OCI-LY7 (cell line): ENCODE measurements at regions of chr5 and their contacts with region 1.

Region 1: DNA sequence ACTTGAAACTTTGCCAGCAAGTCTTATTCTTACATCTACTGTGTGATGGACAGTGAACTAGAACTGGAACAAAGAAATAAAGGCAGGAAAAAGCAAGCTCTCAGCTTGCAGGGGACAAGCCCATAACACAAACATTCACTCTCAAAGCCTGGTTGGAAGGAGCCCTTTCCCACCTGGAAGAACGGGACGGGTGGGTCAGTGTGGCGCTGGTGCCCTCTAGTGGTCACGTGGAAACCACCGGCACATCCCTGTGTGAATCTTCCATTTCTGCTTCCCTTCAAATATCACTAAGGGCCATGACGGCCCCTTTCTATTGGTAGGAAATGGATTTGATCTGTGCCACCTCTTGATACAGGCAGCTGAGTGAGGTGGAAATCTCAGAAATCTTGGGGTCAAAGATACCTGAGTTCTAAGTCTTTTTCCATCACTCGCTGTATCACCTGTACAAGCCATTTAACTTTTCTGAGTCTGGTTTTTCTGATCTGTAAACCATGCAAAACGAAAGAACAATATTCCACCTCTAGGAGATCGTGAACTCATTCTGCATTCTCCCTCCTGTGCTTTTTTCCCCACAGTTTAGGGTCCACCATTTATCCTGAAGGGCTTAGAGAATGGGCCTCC is 211.6 kb downstream of the MSX2 start:
- DNase-seq: peak; percentile 34
- H3K4me3 ChIP-seq: no peak overlapping the region
- H3K27ac ChIP-seq: no peak overlapping the region
- H3K4me1 ChIP-seq: no peaks in the 10 kb centered on the region
- CTCF ChIP-seq: peak; percentile 96

Region 2: DNA sequence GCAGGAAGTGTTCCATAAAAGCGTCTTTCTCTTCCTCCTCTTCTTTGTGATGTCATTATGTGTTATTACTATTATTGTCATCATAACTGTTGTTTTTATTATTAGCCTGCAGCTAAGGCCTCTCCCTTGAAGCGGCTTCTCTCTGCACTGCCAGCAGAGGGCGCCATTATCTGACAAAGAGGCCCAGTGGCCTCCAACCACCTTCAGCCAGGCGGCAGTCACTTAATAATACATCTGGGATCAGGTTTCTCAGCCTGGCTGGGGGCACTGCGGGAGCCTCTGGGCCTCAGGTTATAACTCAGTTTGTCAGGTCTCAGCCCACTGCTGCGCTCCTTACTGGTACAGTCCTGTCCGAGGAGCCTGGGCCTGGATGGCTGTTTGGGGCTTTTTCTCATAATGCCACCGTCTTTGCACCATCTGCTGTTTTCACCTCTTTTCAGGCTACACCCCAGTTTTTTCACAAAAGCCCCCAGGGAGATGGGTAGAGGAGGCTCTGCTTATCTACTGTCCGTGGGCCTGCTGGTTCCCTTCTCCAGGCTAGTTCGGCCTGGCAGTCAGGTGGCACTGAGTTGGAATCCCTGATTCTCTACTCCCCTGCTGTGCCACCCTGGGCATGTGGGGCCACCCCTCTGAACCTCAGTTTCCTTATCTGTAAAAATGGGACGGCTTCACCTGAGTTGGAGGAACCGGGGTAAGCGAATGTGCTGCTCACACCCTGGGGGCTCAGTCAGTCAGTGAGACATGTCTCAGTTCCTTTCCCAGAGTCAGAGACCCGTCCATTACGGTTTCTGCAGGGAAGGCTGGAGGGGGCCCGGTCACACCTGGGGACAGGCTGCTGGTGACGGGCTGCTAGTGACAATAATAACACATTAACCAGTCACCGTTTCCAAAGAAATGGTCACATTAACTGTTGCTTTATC is 608.4 kb before region 1 on chr5:
- CTCF ChIA-PET with region 1: no interaction called
- POLR2A ChIA-PET with region 1: no interaction called
- intact Hi-C with region 1: loop called (anchors 5 kb)
- DNase-seq: peak; percentile 74
- H3K4me3 ChIP-seq: no peak overlapping the region
- H3K27ac ChIP-seq: no peak overlapping the region
- H3K4me1 ChIP-seq: no peaks in the 10 kb centered on the region
- CTCF ChIP-seq: peak; percentile 90

Region 3: DNA sequence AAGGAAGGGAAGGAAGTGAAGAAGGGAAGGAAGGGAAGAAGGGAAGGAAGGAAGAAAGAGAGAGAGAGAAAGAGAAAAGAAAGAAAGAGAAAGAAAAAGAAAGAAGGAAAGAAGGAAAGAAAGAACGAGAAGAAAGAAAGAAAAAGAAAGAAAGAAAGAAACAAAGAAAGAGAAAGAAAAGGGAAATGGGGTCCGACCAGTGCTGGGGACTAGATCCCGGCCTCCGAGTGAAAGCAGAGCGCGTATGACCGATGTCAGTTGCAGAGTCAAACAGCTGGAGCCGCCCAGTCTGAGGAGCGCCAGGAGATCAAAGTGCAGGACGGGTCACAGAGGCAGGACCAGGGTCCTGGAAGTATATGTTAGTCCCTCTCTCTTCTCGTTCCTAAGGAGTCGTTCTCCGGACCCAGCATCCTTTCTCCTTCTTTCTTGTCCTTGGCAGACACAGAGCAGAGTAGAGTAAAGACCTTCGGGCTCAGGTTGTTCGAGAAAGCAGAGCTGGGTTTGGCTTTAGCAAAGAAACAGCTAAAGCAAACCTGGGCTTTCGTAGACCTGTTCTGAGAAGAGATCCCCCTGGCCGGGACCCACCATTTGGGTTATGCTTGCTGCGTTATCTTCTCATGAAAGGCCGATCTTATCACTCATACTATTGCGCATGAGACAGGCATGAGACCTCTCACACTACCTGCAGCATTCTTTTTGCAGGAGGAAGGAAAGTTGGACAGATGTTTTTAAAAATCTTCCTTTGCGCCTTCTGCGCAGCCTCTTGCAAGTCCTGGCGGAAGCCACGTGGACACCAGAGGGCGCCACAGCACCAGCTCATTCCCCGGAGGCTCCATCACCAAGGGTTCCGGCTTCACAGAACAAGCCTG is 516.8 kb before region 1 on chr5:
- CTCF ChIA-PET with region 1: no interaction called
- POLR2A ChIA-PET with region 1: no interaction called
- intact Hi-C with region 1: loop called (anchors 5 kb)
- DNase-seq: peak; percentile 57
- H3K4me3 ChIP-seq: no peak overlapping the region
- H3K27ac ChIP-seq: no peak overlapping the region
- H3K4me1 ChIP-seq: no peaks in the 10 kb centered on the region
- CTCF ChIP-seq: peak; percentile 90

Region 4: DNA sequence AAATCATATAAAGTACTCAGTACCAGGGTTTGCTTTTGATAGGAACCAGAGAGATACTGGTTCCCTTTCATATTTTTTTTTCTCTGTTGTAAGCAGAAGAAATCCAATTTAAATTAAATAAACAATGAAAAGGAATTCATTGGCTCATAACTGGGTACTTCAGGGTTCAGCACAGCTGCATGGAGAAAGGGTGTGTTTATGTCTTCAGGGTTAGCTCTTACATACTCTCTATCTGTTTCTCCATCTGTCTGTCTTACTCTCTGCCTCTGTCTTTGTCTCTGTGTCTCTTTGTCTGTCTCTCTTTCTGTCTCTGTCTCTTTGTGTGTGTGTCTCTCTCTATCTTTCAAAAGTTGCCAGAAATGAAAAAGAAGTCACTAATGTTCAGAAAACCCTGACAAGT is 134.3 kb after region 1 on chr5:
- CTCF ChIA-PET with region 1: no interaction called
- POLR2A ChIA-PET with region 1: no interaction called
- intact Hi-C with region 1: no loop called
- DNase-seq: no peak
- H3K4me3 ChIP-seq: no peak overlapping the region
- H3K27ac ChIP-seq: no peak overlapping the region
- H3K4me1 ChIP-seq: no peaks in the 10 kb centered on the region
- CTCF ChIP-seq: no peak